Activated B cell treated with CpG ODN at 0.5 μM for 24 hours (primary cell): ENCODE measurements at regions of chr19 and their contacts with region 1.

Region 1: GRCh38 chr19:4791170-4792018 is at the start of gene FEM1A:
- DNase-seq: peak; percentile 97
- ATAC-seq: peak; percentile 95
- H3K4me3 Mint-ChIP-seq: peak within 1 kb of the TSS; percentile 79
- H3K27ac Mint-ChIP-seq: peak within 1 kb of the TSS; percentile 82
- H3K4me1 Mint-ChIP-seq: peaks cover 33% of the 10 kb centered on the region
- H3K27me3 Mint-ChIP-seq: peaks cover 2% of the 10 kb centered on the region
- CTCF ChIP-seq: peak; percentile 84
- total RNA-seq, gene FEM1A: 16.7 and 17.9 TPM in 2 replicates

Region 2: DNA sequence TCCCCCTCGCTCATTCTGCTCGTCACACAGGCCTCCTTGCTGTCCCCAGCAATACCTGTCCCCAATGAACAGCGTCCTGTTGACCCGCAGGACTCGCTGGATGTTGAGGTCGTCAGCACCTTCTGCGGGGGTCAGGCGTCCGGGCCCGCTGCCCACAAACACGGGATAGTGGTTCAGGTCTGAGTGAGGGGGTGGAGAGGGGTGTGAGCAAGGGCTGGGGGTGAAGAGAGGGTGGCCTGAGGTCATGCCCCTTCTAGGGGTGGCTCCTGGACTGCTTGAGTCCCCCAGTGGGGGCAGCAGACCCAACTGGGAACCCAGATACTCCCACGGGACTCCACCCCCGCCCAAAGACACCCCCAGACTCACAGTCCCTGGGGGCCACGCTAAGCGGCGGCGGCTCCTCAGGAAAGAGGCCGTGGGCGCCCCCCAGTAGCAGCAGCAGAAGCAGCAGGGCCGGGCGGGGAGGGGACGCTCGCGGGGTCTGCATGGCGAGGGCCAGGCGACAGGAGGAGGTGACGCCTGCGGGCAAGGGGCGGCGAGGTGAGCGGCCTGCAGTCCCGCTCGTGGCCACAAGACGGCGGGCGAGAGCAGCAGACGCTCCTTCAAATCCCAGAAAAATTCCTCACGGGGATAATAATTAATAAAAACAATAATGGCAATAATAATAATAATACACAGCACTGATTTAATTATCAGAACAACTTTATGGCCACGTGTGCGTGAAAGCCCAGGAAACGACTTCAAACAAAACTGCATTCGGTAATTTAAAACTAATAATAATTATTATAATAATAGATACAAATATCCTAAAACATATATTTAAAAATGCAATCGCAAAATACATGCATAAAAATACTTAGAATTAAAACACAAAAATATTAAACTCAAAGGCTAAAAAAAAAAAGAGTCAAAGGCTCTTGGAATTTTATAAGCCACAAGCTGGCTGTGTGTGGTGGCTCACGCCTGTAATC is 233.1 kb before region 1 on chr19:
- CTCF ChIA-PET with region 1: no interaction called
- POLR2A ChIA-PET with region 1: no interaction called
- intact Hi-C with region 1: loop called (anchors 5 kb)
- DNase-seq: peak; percentile 49
- ATAC-seq: peak; percentile 34
- H3K4me3 Mint-ChIP-seq: no peak overlapping the region
- H3K27ac Mint-ChIP-seq: no peak overlapping the region
- H3K4me1 Mint-ChIP-seq: peaks cover 4% of the 10 kb centered on the region
- H3K27me3 Mint-ChIP-seq: no peaks in the 10 kb centered on the region
- CTCF ChIP-seq: peak; percentile 99

Region 3: DNA sequence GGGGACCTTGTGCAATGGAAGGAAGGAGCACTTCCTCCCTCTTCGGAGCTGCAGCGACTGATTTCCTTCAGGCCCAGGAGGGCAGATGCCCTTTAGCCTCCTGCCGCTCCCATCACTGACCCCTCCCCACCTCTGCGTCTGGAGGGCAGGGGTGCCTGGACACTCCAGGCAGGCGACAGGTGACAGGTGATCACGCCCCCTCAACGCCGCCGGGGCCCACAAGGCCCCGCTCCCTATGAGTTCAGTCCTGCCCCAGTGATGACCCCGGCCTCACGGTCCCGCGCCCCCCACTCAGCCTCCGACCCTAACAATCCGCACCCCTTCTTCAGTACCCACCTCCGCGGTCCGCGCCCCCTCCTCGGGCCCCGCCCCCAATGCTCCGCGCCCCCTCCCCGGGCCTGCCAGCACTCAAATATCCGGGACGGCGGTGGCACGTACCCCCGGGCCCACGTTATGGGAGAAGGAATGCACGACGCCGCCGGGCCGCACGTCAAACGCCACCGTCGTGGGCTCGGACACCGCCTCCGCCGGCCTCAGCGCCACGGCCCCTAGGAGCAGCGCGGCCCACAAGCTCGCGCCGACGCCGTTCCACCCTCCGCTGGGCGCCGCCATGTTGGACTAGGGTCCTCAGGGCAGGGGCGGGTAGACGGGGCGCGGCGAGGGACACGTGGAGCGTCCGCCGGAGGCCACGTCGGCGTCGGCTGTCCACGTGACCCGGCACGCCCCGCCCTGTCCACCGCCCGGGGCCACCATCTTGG is 121.5 kb before region 1 on chr19 and contains the start of gene MYDGF:
- CTCF ChIA-PET with region 1: no interaction called
- POLR2A ChIA-PET with region 1: no interaction called
- intact Hi-C with region 1: loop called (anchors 1 kb)
- DNase-seq: peak; percentile 93
- ATAC-seq: peak; percentile 98
- H3K4me3 Mint-ChIP-seq: peak within 1 kb of the TSS; percentile 89
- H3K27ac Mint-ChIP-seq: peak within 1 kb of the TSS; percentile 77
- H3K4me1 Mint-ChIP-seq: peaks cover 18% of the 10 kb centered on the region
- H3K27me3 Mint-ChIP-seq: no peaks in the 10 kb centered on the region
- CTCF ChIP-seq: no peak
- total RNA-seq, gene MYDGF: 30.9 and 31.6 TPM in 2 replicates

Region 4: DNA sequence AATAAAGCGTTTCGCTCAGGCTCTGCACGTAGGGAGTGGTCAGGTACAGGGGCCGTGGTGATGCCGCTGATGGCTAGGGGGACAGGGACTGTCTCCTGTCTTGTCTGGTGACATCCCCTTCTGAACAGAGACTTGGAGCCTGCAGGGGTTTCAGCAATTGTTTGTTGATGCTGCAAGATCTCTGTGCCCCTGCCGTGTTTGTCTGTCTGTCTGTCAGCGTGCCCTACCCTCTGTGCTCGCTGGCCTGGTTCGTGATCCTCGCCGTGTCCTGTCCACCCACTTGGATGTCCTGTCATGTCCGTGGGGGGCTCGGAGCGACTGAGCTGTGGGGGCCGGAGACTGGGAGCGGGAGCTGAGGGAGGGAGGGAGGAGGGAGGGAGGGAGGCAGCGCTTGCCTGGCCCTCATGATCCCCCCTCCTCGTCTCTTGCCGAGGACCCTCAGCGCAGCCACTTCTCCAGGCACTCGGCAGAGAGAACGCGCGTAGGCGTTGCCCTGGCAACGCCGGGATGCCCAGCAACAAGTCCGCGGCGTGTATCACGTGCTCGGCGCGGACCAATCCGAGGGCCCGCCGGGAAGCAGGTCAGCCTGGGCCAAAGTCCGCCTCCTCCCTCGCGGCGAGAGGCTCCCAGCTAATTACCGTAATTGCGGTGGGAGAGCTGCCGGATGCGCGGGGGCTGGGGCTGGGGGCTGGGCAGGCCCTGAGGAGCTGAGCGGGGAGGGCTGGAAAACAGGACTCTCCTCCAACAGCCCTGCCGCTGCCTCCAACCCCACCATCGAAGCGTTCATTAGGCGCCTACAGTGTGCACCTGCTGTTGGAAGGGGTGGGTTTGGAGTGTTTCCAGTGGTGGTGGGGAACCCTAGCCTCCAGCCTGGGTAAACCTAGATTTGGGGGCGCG is 31.8 kb before region 1 on chr19:
- CTCF ChIA-PET with region 1: interaction called, 3 read pairs
- POLR2A ChIA-PET with region 1: interaction called, 7 read pairs
- intact Hi-C with region 1: loop called (anchors 1 kb)
- DNase-seq: peak; percentile 67
- ATAC-seq: peak; percentile 95
- H3K4me3 Mint-ChIP-seq: peak overlapping the region; percentile 67
- H3K27ac Mint-ChIP-seq: no peak overlapping the region
- H3K4me1 Mint-ChIP-seq: peaks cover 13% of the 10 kb centered on the region
- H3K27me3 Mint-ChIP-seq: peaks cover 40% of the 10 kb centered on the region
- CTCF ChIP-seq: no peak

Region 5: GRCh38 chr19:4867534-4868285 is 76.3 kb after region 1 on chr19 and contains the start of gene PLIN3:
- CTCF ChIA-PET with region 1: interaction called, 5 read pairs
- POLR2A ChIA-PET with region 1: interaction called, 14 read pairs
- intact Hi-C with region 1: no loop called
- DNase-seq: peak; percentile 90
- ATAC-seq: peak; percentile 95
- H3K4me3 Mint-ChIP-seq: peak within 1 kb of the TSS; percentile 85
- H3K27ac Mint-ChIP-seq: peak within 1 kb of the TSS; percentile 69
- H3K4me1 Mint-ChIP-seq: peaks cover 30% of the 10 kb centered on the region
- H3K27me3 Mint-ChIP-seq: no peaks in the 10 kb centered on the region
- CTCF ChIP-seq: no peak
- total RNA-seq, gene PLIN3: 28.7 and 29.0 TPM in 2 replicates

Region 6: DNA sequence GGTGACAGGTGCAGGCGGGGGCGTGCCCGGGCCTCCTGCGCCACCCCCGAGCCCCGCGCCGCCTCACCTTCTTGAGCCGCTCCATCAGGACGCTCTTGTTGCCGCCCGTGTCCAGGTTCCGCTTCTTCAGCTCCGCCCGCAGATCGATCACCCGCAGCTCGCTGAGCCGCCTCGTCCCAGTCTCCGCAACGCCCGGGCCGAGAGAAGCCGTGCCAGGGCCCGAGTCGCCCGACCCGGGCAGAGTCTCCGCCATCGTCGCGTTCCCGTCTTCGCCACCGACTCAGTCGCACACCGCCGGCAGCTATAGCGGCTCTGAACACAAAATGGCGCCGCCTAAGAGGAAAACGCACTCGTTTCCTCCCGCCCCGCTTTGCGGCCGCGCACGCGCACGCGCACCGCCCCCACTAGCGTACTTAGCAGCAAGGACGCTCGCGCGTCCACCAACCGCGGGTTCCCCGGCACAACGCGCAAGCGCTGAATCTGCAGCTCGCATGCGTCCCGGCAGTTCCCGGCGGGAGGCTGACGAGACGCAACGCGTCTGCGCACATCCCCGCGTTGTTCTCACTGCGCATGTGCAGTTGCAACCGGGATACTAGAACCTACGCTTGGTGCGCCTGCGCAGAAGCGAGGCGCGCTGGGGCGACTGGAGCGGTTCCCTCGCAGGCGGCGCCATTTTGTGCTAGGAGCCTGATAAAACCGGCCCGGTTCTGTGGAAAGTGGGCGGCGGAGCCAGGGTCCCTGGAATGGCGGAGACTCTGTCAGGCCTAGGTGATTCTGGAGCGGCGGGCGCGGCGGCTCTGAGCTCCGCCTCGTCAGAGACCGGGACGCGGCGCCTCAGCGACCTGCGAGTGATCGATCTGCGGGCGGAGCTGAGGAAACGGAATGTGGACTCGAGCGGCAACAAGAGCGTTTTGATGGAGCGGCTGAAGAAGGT is 831.3 kb after region 1 on chr19 and contains the starts of genes SAFB and SAFB2:
- CTCF ChIA-PET with region 1: no interaction called
- POLR2A ChIA-PET with region 1: interaction called, 6 read pairs
- intact Hi-C with region 1: loop called (anchors 2 kb)
- DNase-seq: peak; percentile 98
- ATAC-seq: peak; percentile 79
- H3K4me3 Mint-ChIP-seq: peak within 1 kb of the TSS; percentile 100
- H3K27ac Mint-ChIP-seq: peak within 1 kb of the TSS; percentile 99
- H3K4me1 Mint-ChIP-seq: peaks cover 77% of the 10 kb centered on the region
- H3K27me3 Mint-ChIP-seq: peaks cover 2% of the 10 kb centered on the region
- CTCF ChIP-seq: no peak
- total RNA-seq, gene SAFB: 162 and 171 TPM in 2 replicates
- total RNA-seq, gene SAFB2: 123 and 143 TPM in 2 replicates

Region 7: GRCh38 chr19:5904352-5905113 is 1113.1 kb after region 1 on chr19 and contains the start of gene VMAC:
- CTCF ChIA-PET with region 1: no interaction called
- POLR2A ChIA-PET with region 1: interaction called, 5 read pairs
- intact Hi-C with region 1: loop called (anchors 2 kb)
- DNase-seq: peak; percentile 100
- ATAC-seq: peak; percentile 78
- H3K4me3 Mint-ChIP-seq: peak within 1 kb of the TSS; percentile 95
- H3K27ac Mint-ChIP-seq: peak within 1 kb of the TSS; percentile 98
- H3K4me1 Mint-ChIP-seq: peaks cover 38% of the 10 kb centered on the region
- H3K27me3 Mint-ChIP-seq: no peaks in the 10 kb centered on the region
- CTCF ChIP-seq: no peak
- total RNA-seq, gene VMAC: 11.2 and 13.3 TPM in 2 replicates